GM12878 (cell line): ENCODE measurements at regions of chr6 and their contacts with region 1.

Region 1: DNA sequence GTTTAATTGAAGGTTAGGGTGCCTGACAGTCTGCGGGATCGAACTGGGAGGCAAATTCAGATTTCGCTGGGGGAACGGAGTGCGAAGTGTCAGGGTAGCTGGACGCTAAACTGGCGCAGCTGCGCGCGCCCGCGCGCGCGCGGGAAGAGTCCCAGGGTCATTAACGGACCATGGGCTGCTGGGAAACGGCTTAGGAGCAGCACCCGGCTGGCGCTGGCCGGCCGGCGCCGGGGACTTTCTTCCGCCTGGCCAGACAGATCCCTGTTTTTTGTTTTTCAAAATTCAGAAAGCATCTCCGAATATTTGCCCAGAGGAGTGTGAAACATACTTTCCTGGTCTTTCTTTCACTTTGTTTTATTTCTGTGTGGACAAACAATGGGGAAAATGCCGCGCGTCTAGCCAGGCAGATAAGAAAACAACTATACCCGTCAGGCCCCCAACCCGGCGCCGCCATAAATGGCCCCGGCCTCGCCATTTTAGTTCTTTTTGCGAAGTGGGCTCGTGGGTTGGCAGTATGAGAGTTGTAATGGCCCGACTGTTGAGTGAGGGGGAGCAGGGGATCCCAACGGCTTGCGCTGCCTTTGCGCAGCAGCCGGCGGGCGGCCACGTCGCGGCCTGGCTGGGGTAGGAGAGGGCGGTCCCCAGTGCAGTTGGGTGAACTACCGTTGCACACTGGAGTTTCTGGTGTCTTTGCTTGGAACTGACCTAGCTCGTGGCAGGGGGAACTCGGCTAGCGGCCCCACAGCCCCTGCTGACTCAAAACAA is 7.1 kb downstream of the HSPA1B start:
- DNase-seq: peak; percentile 50
- ATAC-seq: peak; percentile 72
- H3K4me3 ChIP-seq: peak overlapping the region; percentile 82
- H3K27ac ChIP-seq: peak overlapping the region; percentile 96
- H3K4me1 ChIP-seq: peaks cover 20% of the 10 kb centered on the region
- H3K27me3 ChIP-seq: no peaks in the 10 kb centered on the region
- CTCF ChIP-seq: no peak
- EP300 ChIP-seq: no peak; a peak in 2 of 4 replicates
- POLR2A ChIP-seq: peak; percentile 99
- RAD21 ChIP-seq: no peak

Region 2: DNA sequence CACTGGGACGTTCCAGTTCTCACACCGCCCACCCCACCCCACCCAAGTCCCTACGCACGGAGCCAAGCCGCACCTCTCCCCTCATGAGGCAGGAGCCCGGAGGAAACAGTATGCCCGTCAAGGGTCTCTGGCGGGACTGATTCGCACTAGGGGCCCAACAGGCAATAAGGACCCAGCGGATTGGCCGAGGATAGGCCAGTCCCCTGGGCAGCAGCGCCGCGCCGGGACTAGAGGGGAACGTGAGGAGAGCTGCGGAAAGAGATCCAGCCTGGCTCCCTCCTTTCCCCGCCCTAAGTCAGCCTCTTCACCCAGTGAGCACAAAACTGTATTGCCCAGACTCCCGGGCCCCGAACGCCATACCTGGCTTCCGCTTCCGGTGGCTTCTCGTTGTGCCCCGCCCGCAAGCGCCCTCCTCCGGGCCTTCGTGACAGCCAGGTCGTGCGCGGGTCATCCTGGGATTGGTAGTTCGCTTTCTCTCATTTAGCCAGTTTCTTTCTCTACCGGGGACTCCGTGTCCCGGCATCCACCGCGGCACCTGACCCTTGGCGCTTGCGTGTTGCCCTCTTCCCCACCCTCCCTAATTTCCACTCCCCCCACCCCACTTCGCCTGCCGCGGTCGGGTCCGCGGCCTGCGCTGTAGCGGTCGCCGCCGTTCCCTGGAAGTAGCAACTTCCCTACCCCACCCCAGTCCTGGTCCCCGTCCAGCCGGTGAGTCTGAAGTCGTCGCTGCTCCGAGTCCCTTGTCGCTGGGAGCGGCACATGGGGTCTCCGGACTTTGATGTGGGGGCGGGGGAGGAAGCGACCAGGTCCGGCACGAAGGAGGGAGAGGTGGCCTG is 168.9 kb before region 1 on chr6 and contains the start of gene CSNK2B:
- CTCF ChIA-PET with region 1: interaction called, 3 read pairs
- POLR2A ChIA-PET with region 1: interaction called, 7 read pairs
- RAD21 ChIA-PET with region 1: interaction called, 5 read pairs
- SMC1A ChIA-PET with region 1: no interaction called
- in situ Hi-C with region 1: no loop called
- intact Hi-C with region 1: loop called (anchors 5 kb)
- DNase-seq: peak; percentile 91
- ATAC-seq: peak; percentile 89
- H3K4me3 ChIP-seq: peak within 1 kb of the TSS; percentile 93
- H3K27ac ChIP-seq: peak within 1 kb of the TSS; percentile 94
- H3K4me1 ChIP-seq: peaks cover 37% of the 10 kb centered on the region
- H3K27me3 ChIP-seq: no peaks in the 10 kb centered on the region
- CTCF ChIP-seq: no peak
- EP300 ChIP-seq: no peak
- POLR2A ChIP-seq: peak; percentile 93
- RAD21 ChIP-seq: no peak
- polyA plus RNA-seq, gene CSNK2B: 286 to 361 TPM

Region 3: DNA sequence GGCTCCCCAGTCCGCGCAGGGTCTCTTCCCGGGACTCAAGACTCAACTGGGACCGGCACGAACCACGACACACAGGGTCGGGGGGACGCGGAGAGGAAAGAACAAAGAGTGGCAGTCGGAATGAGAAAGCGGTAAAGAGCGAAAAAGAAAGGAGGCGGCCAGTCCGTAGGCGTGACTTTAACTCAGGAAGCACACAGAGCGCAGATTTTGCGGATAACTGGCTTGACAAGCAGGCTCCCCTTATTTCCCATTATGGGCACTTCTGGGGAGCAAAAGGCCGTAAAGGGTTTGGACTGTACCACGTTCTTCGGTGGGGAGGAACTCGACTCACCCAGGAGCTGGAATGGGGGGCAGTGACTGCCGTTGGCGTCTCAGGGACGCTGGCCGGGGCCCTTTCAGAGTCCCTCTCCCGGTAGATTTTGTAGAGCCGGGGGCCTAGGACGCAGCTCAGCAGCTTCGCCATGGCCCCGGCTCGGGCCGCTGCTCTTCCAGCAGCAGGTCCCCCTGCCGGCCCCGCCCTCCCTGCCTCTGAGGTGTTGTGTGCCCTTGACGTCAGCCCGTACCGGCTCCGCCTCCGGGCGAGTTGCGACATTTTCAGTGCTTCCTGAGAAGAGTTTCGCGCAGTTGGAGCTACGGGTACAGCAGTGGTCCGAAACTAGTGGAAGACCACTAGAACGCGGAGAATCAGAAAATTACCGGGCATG is 131.6 kb before region 1 on chr6 and contains the start of gene ABHD16A:
- CTCF ChIA-PET with region 1: no interaction called
- POLR2A ChIA-PET with region 1: interaction called, 16 read pairs
- RAD21 ChIA-PET with region 1: interaction called, 5 read pairs
- SMC1A ChIA-PET with region 1: interaction called, 4 read pairs
- in situ Hi-C with region 1: no loop called
- intact Hi-C with region 1: no loop called
- DNase-seq: peak; percentile 95
- ATAC-seq: peak; percentile 96
- H3K4me3 ChIP-seq: peak within 1 kb of the TSS; percentile 96
- H3K27ac ChIP-seq: peak within 1 kb of the TSS; percentile 91
- H3K4me1 ChIP-seq: peaks cover 9% of the 10 kb centered on the region; the same call in 1 of the 2 replicates
- H3K27me3 ChIP-seq: no peaks in the 10 kb centered on the region
- CTCF ChIP-seq: 0 out of 6 replicates have a peak, but pooled peaks of 1 of the 3 experiments have one; percentile 11
- EP300 ChIP-seq: no peak
- POLR2A ChIP-seq: peak; percentile 88
- RAD21 ChIP-seq: no peak
- polyA plus RNA-seq, gene ABHD16A: 7.5 to 14.5 TPM

Region 4: DNA sequence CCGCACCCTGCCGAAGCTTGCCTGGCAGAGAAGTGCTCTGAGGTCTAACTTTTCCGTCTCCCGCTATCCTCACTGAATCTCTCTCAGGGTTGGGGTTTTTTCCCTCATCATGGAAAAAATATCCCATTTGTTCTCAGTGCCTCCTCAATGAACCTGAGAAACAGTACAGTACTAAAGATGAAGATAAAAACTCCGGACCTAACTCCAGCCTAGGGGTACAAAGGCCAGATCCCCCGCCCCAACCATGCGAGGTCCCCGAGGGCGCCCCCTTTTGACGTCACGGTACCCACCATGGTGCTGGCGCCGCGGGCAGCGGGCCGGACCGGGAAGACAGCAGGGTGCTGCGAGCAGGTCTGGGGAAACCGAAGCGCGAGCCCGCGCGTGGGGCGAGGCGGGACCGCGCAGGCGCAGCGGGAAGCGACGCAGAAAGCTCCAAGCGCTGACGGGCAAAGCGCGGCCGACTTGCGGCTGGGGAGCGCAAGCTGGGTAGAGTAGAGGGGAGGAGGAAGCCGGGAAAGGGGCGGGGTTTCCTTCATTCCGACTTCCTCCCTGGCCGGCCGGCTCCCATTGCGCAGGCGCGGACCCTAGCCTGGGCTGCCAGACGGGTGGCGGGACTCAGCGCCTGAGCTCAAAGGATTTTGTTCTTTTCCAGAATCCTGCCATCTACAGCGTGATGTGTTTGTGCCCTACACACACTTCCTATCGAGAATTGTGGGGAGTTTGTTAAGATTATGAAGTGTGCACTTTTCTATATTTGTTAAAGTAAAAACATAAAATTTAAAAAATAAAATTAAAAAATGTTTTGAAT is 27.9 kb before region 1 on chr6 and contains the start of gene LSM2:
- CTCF ChIA-PET with region 1: interaction called, 9 read pairs
- POLR2A ChIA-PET with region 1: interaction called, 14 read pairs
- RAD21 ChIA-PET with region 1: interaction called, 8 read pairs
- SMC1A ChIA-PET with region 1: interaction called, 9 read pairs
- in situ Hi-C with region 1: no loop called
- intact Hi-C with region 1: no loop called
- DNase-seq: peak; percentile 74
- ATAC-seq: peak; percentile 98
- H3K4me3 ChIP-seq: peak within 1 kb of the TSS; percentile 92
- H3K27ac ChIP-seq: peak within 1 kb of the TSS; percentile 81
- H3K4me1 ChIP-seq: peaks cover 5% of the 10 kb centered on the region
- H3K27me3 ChIP-seq: no peaks in the 10 kb centered on the region
- CTCF ChIP-seq: peak; percentile 24 to 34 (median 24); a peak in 3 of 6 replicates
- EP300 ChIP-seq: no peak
- POLR2A ChIP-seq: peak; percentile 92
- RAD21 ChIP-seq: no peak
- polyA plus RNA-seq, gene LSM2: 245 to 248 TPM

Region 5: GRCh38 chr6:31862344-31863227 is 28.0 kb after region 1 on chr6 and contains the start of gene NEU1:
- CTCF ChIA-PET with region 1: interaction called, 17 read pairs
- POLR2A ChIA-PET with region 1: interaction called, 22 read pairs
- RAD21 ChIA-PET with region 1: interaction called, 10 read pairs
- SMC1A ChIA-PET with region 1: interaction called, 24 read pairs
- in situ Hi-C with region 1: no loop called
- intact Hi-C with region 1: loop called (anchors 2 kb)
- DNase-seq: peak; percentile 97
- ATAC-seq: peak; percentile 98
- H3K4me3 ChIP-seq: peak within 1 kb of the TSS; percentile 94
- H3K27ac ChIP-seq: peak within 1 kb of the TSS; percentile 63
- H3K4me1 ChIP-seq: peaks cover 11% of the 10 kb centered on the region
- H3K27me3 ChIP-seq: no peaks in the 10 kb centered on the region
- CTCF ChIP-seq: no peak
- EP300 ChIP-seq: peak in 1 of 2 experiments; percentile 13; a peak in 1 of 4 replicates
- POLR2A ChIP-seq: peak; percentile 100
- RAD21 ChIP-seq: no peak
- polyA plus RNA-seq, gene NEU1: 7.2 to 12.5 TPM